ENCODE measurements at regions of chr12 and their contacts with region 1.

Region 1: GRCh38 chr12:114668151-114668885 is 15.7 kb downstream of the TBX3 start:
- DNase-seq: peak; percentile 94
- H3K4me3 ChIP-seq: peak overlapping the region; percentile 31 to 94
- H3K27ac ChIP-seq: peak overlapping the region; percentile 88 to 98
- H3K4me1 ChIP-seq: no peaks in the 10 kb centered on the region
- H3K27me3 ChIP-seq: no peaks in the 10 kb centered on the region
- CTCF ChIP-seq: peak; percentile 43 to 93 (median 68)
- POLR2A ChIP-seq: peak; percentile 40

Region 2: GRCh38 chr12:114611145-114612018 is 56.9 kb before region 1 on chr12:
- intact Hi-C with region 1: no loop called
- DNase-seq: peak; percentile 31
- H3K4me3 ChIP-seq: no peak overlapping the region
- H3K27ac ChIP-seq: no peak overlapping the region
- H3K4me1 ChIP-seq: no peaks in the 10 kb centered on the region
- H3K27me3 ChIP-seq: no peaks in the 10 kb centered on the region
- CTCF ChIP-seq: no peak
- POLR2A ChIP-seq: no peak

Region 3: GRCh38 chr12:114729731-114730130 is 61.4 kb after region 1 on chr12:
- intact Hi-C with region 1: no loop called
- DNase-seq: no peak
- H3K4me3 ChIP-seq: no peak overlapping the region
- H3K27ac ChIP-seq: no peak overlapping the region
- H3K4me1 ChIP-seq: no peaks in the 10 kb centered on the region
- H3K27me3 ChIP-seq: no peaks in the 10 kb centered on the region
- CTCF ChIP-seq: no peak
- POLR2A ChIP-seq: no peak

Region 4: DNA sequence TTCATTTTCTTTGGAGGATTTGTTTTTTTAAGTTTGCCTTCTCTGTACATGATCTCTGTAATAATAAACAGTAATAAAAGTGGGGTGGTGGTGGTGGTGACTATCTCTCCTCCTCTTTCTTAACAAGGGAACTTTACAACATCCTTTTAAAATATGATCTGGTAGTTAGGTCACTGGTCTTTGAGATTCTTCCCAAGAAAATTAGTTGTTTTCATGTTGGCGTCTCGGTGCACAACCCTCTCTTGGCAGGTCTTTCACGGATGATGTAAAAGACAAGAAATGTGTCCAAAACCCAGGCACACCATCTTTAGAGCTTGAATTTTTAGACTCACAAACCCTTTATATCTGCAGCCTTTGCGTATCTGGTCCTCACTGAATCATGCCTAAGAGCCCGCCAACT is 504.2 kb after region 1 on chr12:
- intact Hi-C with region 1: loop called (anchors 5 kb)
- DNase-seq: no peak
- H3K4me3 ChIP-seq: no peak overlapping the region
- H3K27ac ChIP-seq: no peak overlapping the region
- H3K4me1 ChIP-seq: no peaks in the 10 kb centered on the region
- H3K27me3 ChIP-seq: no peaks in the 10 kb centered on the region
- CTCF ChIP-seq: no peak
- POLR2A ChIP-seq: no peak

Measured in prostate gland (tissue), 2 donors.